Mammary epithelial cell (primary cell): ENCODE measurements at regions of chr17 and their contacts with region 1.

Region 1: DNA sequence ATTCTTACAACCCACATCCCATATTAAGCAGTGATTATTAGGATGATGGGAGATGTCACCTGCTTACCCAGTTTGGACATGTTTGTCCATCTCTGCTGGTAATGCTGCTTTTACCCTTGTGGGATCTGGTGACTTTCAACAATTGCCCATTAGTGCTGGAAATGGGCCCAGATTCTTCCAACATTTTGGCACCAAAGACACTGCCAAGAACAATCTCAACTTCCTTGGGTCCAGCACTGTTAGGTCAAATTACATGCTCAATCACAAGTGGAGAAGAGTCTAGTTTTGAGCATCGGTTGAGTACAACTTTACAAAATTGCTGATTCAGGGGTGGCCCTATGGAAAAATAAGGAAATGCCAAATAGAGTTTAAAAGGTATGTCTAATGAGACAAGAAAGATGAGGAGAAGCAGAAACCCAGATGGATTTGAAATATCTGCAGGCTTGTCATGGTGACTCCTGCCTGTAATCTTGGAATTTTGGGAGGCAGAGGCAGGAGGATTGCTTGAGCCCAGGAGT is 13.0 kb upstream of the ZFP3 start:
- DNase-seq: no peak
- H3K4me3 ChIP-seq: no peak overlapping the region
- H3K27ac ChIP-seq: no peak overlapping the region
- H3K4me1 ChIP-seq: no peaks in the 10 kb centered on the region
- H3K27me3 ChIP-seq: no peaks in the 10 kb centered on the region
- CTCF ChIP-seq: no peak

Region 2: GRCh38 chr17:4739122-4740024 is 325.9 kb before region 1 on chr17 and contains the starts of genes CXCL16 and ZMYND15:
- CTCF ChIA-PET with region 1: no interaction called
- dilution Hi-C with region 1: no loop called
- in situ Hi-C with region 1: no loop called
- intact Hi-C with region 1: loop called (anchors 10 kb)
- DNase-seq: peak; percentile 52
- H3K4me3 ChIP-seq: peak within 1 kb of the TSS; percentile 54 to 74 (median 69)
- H3K27ac ChIP-seq: peak within 1 kb of the TSS; percentile 56
- H3K4me1 ChIP-seq: peaks cover 18% of the 10 kb centered on the region
- H3K27me3 ChIP-seq: no peaks in the 10 kb centered on the region
- CTCF ChIP-seq: no peak
- total RNA-seq, gene CXCL16: 12.7 to 20.2 TPM
- total RNA-seq, gene ZMYND15: 0.33 to 0.52 TPM

Region 3: GRCh38 chr17:4903051-4903818 is 162.1 kb before region 1 on chr17 and contains the start of gene CHRNE:
- CTCF ChIA-PET with region 1: no interaction called
- dilution Hi-C with region 1: no loop called
- in situ Hi-C with region 1: loop called in 1 of 2 experiments (anchors 10 kb)
- intact Hi-C with region 1: loop called (anchors 1 kb)
- DNase-seq: peak; percentile 73
- H3K4me3 ChIP-seq: no peak within 1 kb of the TSS
- H3K27ac ChIP-seq: no peak within 1 kb of the TSS
- H3K4me1 ChIP-seq: peaks cover 15% of the 10 kb centered on the region
- H3K27me3 ChIP-seq: no peaks in the 10 kb centered on the region
- CTCF ChIP-seq: peak; percentile 80 to 81
- total RNA-seq, gene CHRNE: under 0.01 TPM in 1 of 2 donors, not detected in the other

Region 4: DNA sequence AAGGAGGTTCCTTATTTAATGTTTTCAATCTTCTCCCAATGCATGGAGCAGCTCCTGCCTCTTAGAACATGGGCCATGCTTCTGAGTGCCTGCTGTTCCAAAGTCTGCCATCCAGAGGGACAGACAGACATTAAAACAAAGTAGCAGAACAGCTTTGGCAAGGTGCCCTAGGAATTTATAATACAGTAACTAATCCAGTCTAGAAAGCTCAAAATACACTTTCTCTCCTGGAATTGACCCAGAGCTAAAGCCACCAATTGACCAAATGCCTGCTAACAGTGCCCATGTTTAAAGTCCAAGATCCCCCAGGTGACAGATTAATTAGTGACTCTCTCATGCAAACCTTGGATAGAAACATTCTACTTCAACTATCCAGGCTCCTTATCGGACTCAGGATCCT is 151.3 kb before region 1 on chr17:
- CTCF ChIA-PET with region 1: no interaction called
- dilution Hi-C with region 1: no loop called
- in situ Hi-C with region 1: loop called (anchors 10 kb)
- intact Hi-C with region 1: loop called (anchors 1 kb)
- DNase-seq: no peak
- H3K4me3 ChIP-seq: no peak overlapping the region
- H3K27ac ChIP-seq: no peak overlapping the region
- H3K4me1 ChIP-seq: peaks cover 10% of the 10 kb centered on the region
- H3K27me3 ChIP-seq: no peaks in the 10 kb centered on the region
- CTCF ChIP-seq: no peak

Region 5: DNA sequence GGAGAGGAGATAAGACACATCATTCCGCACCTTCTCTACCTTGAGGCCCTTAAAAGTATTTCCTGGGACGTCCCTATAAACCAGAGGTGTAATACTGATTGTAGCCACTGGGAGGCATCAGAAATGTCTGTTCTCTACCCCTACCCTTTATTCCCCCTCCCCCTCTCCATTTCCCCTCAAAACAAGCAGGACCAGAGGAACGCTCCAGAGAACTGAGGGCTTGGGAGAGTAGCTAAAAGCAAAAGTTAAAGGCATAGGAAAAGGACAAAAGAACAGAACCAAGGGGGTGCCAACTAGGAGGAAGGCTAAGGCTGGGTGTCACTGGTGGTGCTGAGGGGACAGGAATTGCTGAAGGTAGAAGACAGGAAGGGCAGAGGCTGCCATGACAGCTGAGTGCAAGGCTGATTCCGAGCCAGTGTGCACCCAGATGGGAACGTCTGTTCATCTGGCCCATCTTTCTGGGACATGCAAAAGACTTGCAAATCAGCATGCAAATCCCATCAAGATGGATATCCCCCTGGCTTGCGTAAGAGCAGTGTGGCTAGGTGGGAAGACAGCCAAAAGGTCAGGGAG is 84.6 kb before region 1 on chr17:
- CTCF ChIA-PET with region 1: no interaction called
- dilution Hi-C with region 1: no loop called
- in situ Hi-C with region 1: no loop called
- intact Hi-C with region 1: loop called (anchors 1 kb)
- DNase-seq: no peak
- H3K4me3 ChIP-seq: no peak overlapping the region
- H3K27ac ChIP-seq: no peak overlapping the region
- H3K4me1 ChIP-seq: no peaks in the 10 kb centered on the region
- H3K27me3 ChIP-seq: no peaks in the 10 kb centered on the region
- CTCF ChIP-seq: peak; percentile 59 to 69

Region 6: DNA sequence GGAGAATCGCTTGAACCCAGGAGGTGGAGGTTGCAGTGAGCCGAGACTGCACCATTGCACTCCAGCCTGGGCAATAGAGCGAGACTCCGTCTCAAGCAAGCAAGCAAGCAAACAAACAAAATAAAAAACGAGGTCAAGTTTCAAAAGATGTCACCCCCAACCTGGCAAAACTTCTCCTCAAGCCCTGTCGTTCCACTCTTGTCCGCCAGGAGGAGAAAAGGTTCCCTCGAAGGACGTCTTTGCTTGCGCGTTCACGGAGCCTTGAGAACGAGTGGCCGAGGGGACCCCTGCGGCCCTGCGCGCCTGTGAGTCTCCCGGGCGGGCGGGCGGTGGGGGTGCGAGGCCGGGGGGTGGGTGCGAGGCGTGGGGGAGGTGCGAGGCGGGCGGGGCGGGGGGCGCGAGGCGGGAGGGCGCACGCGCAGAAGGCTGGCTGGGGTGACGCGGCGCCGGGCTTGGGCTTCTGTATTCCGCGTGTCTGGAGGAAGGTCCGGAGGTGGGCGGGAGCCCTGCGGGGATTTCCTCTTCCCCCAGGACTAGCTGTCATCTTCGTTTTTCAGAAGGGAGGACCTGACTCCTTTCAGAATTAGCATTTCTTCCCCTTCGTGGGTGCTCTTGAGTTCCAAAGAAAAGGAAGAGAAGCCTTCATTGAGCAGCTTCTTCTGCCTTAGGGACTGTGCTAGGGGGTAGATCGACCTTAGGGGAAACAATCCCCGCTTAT is 33.8 kb before region 1 on chr17:
- CTCF ChIA-PET with region 1: no interaction called
- dilution Hi-C with region 1: no loop called
- in situ Hi-C with region 1: no loop called
- intact Hi-C with region 1: loop called (anchors 1 kb)
- DNase-seq: peak; percentile 52
- H3K4me3 ChIP-seq: peak overlapping the region in 1 of 3 experiments; percentile 33
- H3K27ac ChIP-seq: no peak overlapping the region
- H3K4me1 ChIP-seq: peaks cover 5% of the 10 kb centered on the region
- H3K27me3 ChIP-seq: no peaks in the 10 kb centered on the region
- CTCF ChIP-seq: peak; percentile 77 to 81

Region 7: GRCh38 chr17:5097101-5097834 is 32.0 kb after region 1 on chr17:
- CTCF ChIA-PET with region 1: no interaction called
- dilution Hi-C with region 1: no loop called
- in situ Hi-C with region 1: no loop called
- intact Hi-C with region 1: no loop called
- DNase-seq: no peak
- H3K4me3 ChIP-seq: no peak overlapping the region
- H3K27ac ChIP-seq: no peak overlapping the region
- H3K4me1 ChIP-seq: no peaks in the 10 kb centered on the region
- H3K27me3 ChIP-seq: no peaks in the 10 kb centered on the region
- CTCF ChIP-seq: no peak

Region 8: GRCh38 chr17:5111402-5112204 is 46.3 kb after region 1 on chr17 and contains the start of gene ZNF232:
- CTCF ChIA-PET with region 1: no interaction called
- dilution Hi-C with region 1: no loop called
- in situ Hi-C with region 1: no loop called
- intact Hi-C with region 1: no loop called
- DNase-seq: peak; percentile 95
- H3K4me3 ChIP-seq: peak within 1 kb of the TSS; percentile 64 to 92 (median 71)
- H3K27ac ChIP-seq: peak within 1 kb of the TSS; percentile 28
- H3K4me1 ChIP-seq: peaks cover 8% of the 10 kb centered on the region
- H3K27me3 ChIP-seq: peaks cover 11% of the 10 kb centered on the region
- CTCF ChIP-seq: no peak
- total RNA-seq, gene ZNF232: 5.0 to 7.2 TPM

Region 9: DNA sequence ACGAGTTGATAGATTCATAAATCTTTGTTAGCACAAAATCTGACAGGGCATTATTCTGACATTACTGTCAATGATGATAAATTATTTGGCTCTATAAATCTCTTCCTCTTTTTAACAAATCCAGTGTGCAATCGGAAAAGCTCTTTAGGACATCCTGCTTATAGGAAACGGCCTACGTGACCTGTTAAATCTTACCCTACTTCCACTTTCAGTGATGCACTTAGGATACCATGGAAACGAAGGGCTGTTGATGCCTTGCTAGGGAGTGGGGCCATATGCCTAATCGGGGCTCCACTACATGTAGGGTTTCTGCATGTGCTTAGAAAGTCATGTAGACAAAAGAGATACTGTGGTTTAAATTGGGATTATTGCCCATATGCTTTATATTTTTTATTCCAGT is 99.2 kb after region 1 on chr17:
- CTCF ChIA-PET with region 1: no interaction called
- dilution Hi-C with region 1: no loop called
- in situ Hi-C with region 1: no loop called
- intact Hi-C with region 1: no loop called
- DNase-seq: no peak
- H3K4me3 ChIP-seq: no peak overlapping the region
- H3K27ac ChIP-seq: no peak overlapping the region
- H3K4me1 ChIP-seq: no peaks in the 10 kb centered on the region
- H3K27me3 ChIP-seq: no peaks in the 10 kb centered on the region
- CTCF ChIP-seq: no peak